AG04449 (cell line): ENCODE measurements at regions of chr2 and their contacts with region 1.

Region 1: GRCh38 chr2:3662239-3662638 is 4.2 kb downstream of the ALLC start:
- DNase-seq: no peak
- H3K4me3 ChIP-seq: no peak overlapping the region
- CTCF ChIP-seq: no peak

Region 2: GRCh38 chr2:3493615-3494007 is 168.6 kb before region 1 on chr2:
- CTCF ChIA-PET with region 1: no interaction called
- POLR2A ChIA-PET with region 1: no interaction called
- DNase-seq: no peak
- H3K4me3 ChIP-seq: no peak overlapping the region
- CTCF ChIP-seq: no peak

Region 3: GRCh38 chr2:3651691-3652648 is 10.3 kb before region 1 on chr2:
- CTCF ChIA-PET with region 1: interaction called, 13 read pairs
- POLR2A ChIA-PET with region 1: no interaction called
- DNase-seq: no peak
- H3K4me3 ChIP-seq: no peak overlapping the region; the same call in 1 of the 2 replicates
- CTCF ChIP-seq: no peak

Region 4: GRCh38 chr2:3801506-3801905 is 139.3 kb after region 1 on chr2:
- CTCF ChIA-PET with region 1: no interaction called
- POLR2A ChIA-PET with region 1: no interaction called
- DNase-seq: no peak
- H3K4me3 ChIP-seq: no peak overlapping the region
- CTCF ChIP-seq: no peak